ENCODE measurements at regions of chrX and their contacts with region 1.

Region 1: GRCh38 chrX:53013291-53013690 is 35.3 kb upstream of the GPR173 start:
- DNase-seq: no peak
- H3K4me3 ChIP-seq: no peak overlapping the region
- H3K27ac ChIP-seq: no peak overlapping the region
- H3K4me1 ChIP-seq: no peaks in the 10 kb centered on the region
- H3K27me3 ChIP-seq: no peaks in the 10 kb centered on the region
- CTCF ChIP-seq: no peak
- EP300 ChIP-seq: no peak
- POLR2A ChIP-seq: no peak

Region 2: GRCh38 chrX:53044995-53045394 is 31.7 kb after region 1 on chrX:
- in situ Hi-C with region 1: no loop called
- intact Hi-C with region 1: no loop called
- DNase-seq: no peak
- H3K4me3 ChIP-seq: no peak overlapping the region
- H3K27ac ChIP-seq: no peak overlapping the region
- H3K4me1 ChIP-seq: no peaks in the 10 kb centered on the region
- H3K27me3 ChIP-seq: no peaks in the 10 kb centered on the region
- CTCF ChIP-seq: no peak
- EP300 ChIP-seq: no peak
- POLR2A ChIP-seq: no peak

Region 3: GRCh38 chrX:54529552-54530357 is 1516.5 kb after region 1 on chrX and contains the start of gene GNL3L:
- in situ Hi-C with region 1: no loop called
- intact Hi-C with region 1: loop called (anchors 5 kb)
- DNase-seq: peak; percentile 90
- H3K4me3 ChIP-seq: peak within 1 kb of the TSS; percentile 49 to 83 (median 70)
- H3K27ac ChIP-seq: peak within 1 kb of the TSS; percentile 77 to 86 (median 84)
- H3K4me1 ChIP-seq: peaks cover 0 to 22% (median 3%) of the 10 kb centered on the region in 4 donors
- H3K27me3 ChIP-seq: no peaks in the 10 kb centered on the region
- CTCF ChIP-seq: no peak
- EP300 ChIP-seq: no peak
- POLR2A ChIP-seq: peak; percentile 27
- total RNA-seq, gene GNL3L: 29.5 to 36.6 (median 31.7) TPM

Measured in transverse colon (tissue), 4 donors.